ACHN (cell line): ENCODE measurements at regions of chr1 and their contacts with region 1.

Region 1: GRCh38 chr1:100866041-100866900 is 28.4 kb downstream of the EXTL2 start:
- DNase-seq: peak; percentile 41

Region 2: DNA sequence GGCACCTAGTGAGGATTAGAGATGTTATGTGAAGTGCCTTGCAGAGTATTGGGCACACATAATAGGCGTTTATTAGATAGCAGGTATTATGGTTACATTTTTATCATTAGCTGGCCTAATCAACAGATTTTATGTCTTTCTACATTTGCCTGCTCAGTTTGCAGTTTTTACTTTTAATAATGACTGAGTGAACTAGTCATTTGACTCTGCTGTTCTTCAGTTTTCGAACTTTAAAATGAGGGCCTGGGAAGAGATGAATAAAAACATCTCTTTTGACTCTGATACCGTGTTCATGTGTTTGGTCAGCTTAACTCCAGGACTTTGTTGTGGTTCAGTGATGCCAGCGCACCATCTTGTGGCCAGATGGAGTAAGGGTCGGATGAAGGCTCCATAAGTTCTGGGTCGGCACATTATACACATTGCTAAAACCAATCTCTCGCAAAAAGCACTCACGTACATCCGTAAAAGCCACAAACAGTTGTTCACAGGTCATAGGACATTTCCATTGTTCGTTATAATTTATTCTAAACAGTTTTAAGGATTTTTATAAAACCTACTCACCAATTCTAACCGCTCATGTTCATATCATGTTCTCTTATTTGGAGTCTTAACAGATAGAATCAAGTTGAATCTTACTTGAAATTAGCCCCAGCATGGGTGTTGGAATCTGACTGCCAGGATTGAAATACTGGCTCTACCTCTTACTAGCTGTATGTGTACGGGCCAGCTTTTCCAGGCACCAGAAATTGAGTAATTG is 406.7 kb before region 1 on chr1:
- in situ Hi-C with region 1: loop called (anchors 25 kb)
- DNase-seq: peak; percentile 71

Region 3: DNA sequence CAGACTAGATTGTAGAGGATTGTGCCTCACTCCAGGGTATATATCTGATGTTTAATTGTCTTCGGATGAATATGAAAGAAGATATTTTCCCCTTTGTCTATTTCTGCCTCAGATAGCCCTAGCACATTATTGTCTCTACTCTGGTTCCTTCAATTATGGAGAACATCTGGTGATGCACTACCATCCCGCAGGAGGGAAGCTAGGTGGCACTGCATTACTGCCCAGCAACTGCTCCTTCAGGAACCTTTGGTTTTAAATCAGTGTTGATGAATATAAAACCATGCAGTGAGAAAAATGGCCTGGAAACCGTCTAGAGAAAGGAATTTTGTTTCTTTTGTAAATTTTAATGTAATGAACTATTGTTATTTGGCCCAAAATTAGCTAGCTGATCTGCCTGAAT is 259.8 kb before region 1 on chr1:
- in situ Hi-C with region 1: loop called (anchors 25 kb)
- DNase-seq: peak; percentile 66

Region 4: DNA sequence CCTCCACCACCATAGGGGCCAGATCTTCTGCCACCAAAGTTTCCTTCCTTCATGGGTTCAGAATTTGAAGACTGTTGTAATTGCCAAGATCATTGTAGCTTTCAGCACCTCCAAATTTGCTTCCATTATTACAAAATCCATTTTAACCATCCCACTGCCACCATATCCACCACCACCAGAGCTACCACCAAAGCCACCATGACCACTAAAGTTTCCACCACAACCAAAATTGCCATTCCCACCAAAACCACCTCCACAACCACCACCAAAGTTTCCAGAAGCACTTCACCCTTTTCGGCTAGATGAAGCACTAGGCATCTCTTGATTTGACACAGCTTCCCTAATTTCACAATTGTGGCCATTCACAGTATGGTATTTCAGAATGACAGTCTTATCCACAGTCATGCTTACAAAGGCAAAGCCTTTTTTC is 74.8 kb after region 1 on chr1:
- in situ Hi-C with region 1: no loop called
- DNase-seq: no peak

Region 5: GRCh38 chr1:101002551-101002950 is 136.3 kb after region 1 on chr1:
- in situ Hi-C with region 1: no loop called
- DNase-seq: no peak